Naive thymus-derived CD4-positive, alpha-beta T cell (primary cell): ENCODE measurements at regions of chr9 and their contacts with region 1.

Region 1: DNA sequence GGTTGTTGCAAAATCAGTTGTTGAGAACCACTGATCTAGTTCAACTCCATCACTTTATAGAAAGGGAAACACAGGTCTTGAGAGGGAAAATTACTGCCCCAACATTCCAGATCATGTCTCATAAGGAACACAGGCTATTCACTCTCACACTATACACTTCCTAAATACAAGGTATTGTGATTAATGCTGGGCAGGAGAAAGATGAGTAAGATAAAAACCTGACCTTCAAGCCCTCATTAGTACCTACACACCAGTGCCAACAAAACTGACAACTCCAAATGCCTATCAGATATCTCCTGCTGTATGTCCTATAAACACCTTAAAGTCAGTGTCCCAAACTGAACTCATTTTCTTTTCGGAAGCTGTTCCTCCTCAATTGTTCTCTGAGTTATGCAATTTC is 8.2 kb downstream of the GNE start:
- DNase-seq: no peak
- ATAC-seq: no peak
- H3K4me3 ChIP-seq: no peak overlapping the region
- H3K4me3 Mint-ChIP-seq: no peak overlapping the region
- H3K27ac ChIP-seq: no peak overlapping the region
- H3K27ac Mint-ChIP-seq: peak overlapping the region in 2 of 9 donors; percentile 0 to 4
- H3K4me1 ChIP-seq: no peaks in the 10 kb centered on the region
- H3K4me1 Mint-ChIP-seq: peaks cover 10 to 25% (median 15%) of the 10 kb centered on the region in 7 donors
- H3K27me3 ChIP-seq: no peaks in the 10 kb centered on the region
- H3K27me3 Mint-ChIP-seq: no peaks in the 10 kb centered on the region

Region 2: DNA sequence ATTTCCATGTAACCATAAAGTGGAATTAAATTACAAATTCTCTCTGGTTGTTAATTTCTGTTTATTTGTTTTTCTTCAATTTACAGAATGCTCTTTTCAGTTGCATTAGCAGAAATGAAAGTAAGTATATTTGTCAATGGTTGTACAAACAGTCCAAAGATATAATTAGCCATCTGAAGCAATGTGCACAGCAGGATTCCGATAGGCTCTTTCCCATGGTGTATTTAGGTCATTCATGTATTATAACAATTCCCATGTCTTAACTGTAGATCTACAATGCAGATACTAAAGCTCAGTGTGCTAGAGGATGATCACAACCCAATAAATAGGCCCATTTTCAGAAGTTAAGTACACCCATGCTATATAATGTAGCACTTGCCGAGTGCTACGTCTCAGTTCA is 169.6 kb before region 1 on chr9:
- CTCF ChIA-PET with region 1: no interaction called
- POLR2A ChIA-PET with region 1: no interaction called
- intact Hi-C with region 1: no loop called
- DNase-seq: no peak
- ATAC-seq: no peak
- H3K4me3 ChIP-seq: no peak overlapping the region
- H3K4me3 Mint-ChIP-seq: no peak overlapping the region
- H3K27ac ChIP-seq: no peak overlapping the region
- H3K27ac Mint-ChIP-seq: peak overlapping the region in 1 of 9 donors; percentile 65
- H3K4me1 ChIP-seq: no peaks in the 10 kb centered on the region
- H3K4me1 Mint-ChIP-seq: no peaks in the 10 kb centered on the region
- H3K27me3 ChIP-seq: no peaks in the 10 kb centered on the region
- H3K27me3 Mint-ChIP-seq: no peaks in the 10 kb centered on the region

Region 3: GRCh38 chr9:36102742-36103495 is 147.2 kb before region 1 on chr9:
- CTCF ChIA-PET with region 1: no interaction called
- POLR2A ChIA-PET with region 1: no interaction called
- intact Hi-C with region 1: no loop called
- DNase-seq: peak; percentile 70 to 87 (median 82)
- ATAC-seq: peak; percentile 100
- H3K4me3 ChIP-seq: no peak overlapping the region
- H3K4me3 Mint-ChIP-seq: no peak overlapping the region
- H3K27ac ChIP-seq: no peak overlapping the region
- H3K27ac Mint-ChIP-seq: peak overlapping the region in 4 of 9 donors; percentile 12 to 76 (median 61)
- H3K4me1 ChIP-seq: peaks cover 0 to 5% of the 10 kb centered on the region in 2 donors
- H3K4me1 Mint-ChIP-seq: peaks cover 5 to 8% (median 8%) of the 10 kb centered on the region in 7 donors
- H3K27me3 ChIP-seq: no peaks in the 10 kb centered on the region
- H3K27me3 Mint-ChIP-seq: no peaks in the 10 kb centered on the region

Region 4: GRCh38 chr9:36328798-36329411 is 78.8 kb after region 1 on chr9:
- CTCF ChIA-PET with region 1: interaction called, 45 read pairs
- POLR2A ChIA-PET with region 1: interaction called, 3 read pairs
- intact Hi-C with region 1: loop called (anchors 1 kb)
- DNase-seq: peak in 7 of 9 donors; percentile 33 to 70 (median 62)
- ATAC-seq: peak; percentile 74
- H3K4me3 ChIP-seq: no peak overlapping the region
- H3K4me3 Mint-ChIP-seq: no peak overlapping the region
- H3K27ac ChIP-seq: no peak overlapping the region
- H3K27ac Mint-ChIP-seq: peak overlapping the region in 1 of 9 donors; percentile 36
- H3K4me1 ChIP-seq: no peaks in the 10 kb centered on the region
- H3K4me1 Mint-ChIP-seq: peaks cover 0 to 16% (median 4%) of the 10 kb centered on the region in 7 donors
- H3K27me3 ChIP-seq: no peaks in the 10 kb centered on the region
- H3K27me3 Mint-ChIP-seq: no peaks in the 10 kb centered on the region

Region 5: DNA sequence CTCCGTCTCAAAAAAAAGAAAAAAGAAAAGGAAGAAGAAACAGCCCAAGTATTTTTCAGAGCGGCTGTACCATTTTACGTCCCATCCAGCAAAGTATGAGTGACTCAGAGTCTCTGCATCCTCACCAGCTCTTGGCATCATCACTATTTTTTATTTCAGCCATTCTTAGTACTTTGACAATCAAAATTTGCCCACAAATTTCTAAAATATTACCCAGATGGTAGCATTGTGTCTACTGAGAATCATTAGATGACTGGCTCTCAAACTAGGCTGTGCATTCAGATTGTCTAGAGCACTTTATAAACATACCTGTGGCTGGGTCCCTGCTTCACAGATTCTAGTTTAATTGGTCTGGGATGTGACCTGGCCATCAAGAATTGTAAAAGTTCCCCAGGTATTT is 301.1 kb after region 1 on chr9:
- CTCF ChIA-PET with region 1: no interaction called
- POLR2A ChIA-PET with region 1: no interaction called
- intact Hi-C with region 1: loop called in 1 of 2 experiments (anchors 2 kb)
- DNase-seq: no peak
- ATAC-seq: no peak
- H3K4me3 ChIP-seq: no peak overlapping the region
- H3K4me3 Mint-ChIP-seq: no peak overlapping the region
- H3K27ac ChIP-seq: no peak overlapping the region
- H3K27ac Mint-ChIP-seq: no peak overlapping the region
- H3K4me1 ChIP-seq: no peaks in the 10 kb centered on the region
- H3K4me1 Mint-ChIP-seq: peaks cover 0 to 6% (median 2%) of the 10 kb centered on the region in 7 donors
- H3K27me3 ChIP-seq: no peaks in the 10 kb centered on the region
- H3K27me3 Mint-ChIP-seq: peaks cover 0 to 22% (median 3%) of the 10 kb centered on the region in 5 donors